CD4-positive, alpha-beta memory T cell (primary cell): ENCODE measurements at regions of chr21 and their contacts with region 1.

Region 1: GRCh38 chr21:36966066-36966820 is at the start of gene HLCS:
- DNase-seq: peak; percentile 72 to 80 (median 76)
- H3K4me3 ChIP-seq: peak within 1 kb of the TSS in 1 of 2 donors; percentile 54
- H3K4me3 Mint-ChIP-seq: peak within 1 kb of the TSS; percentile 76 to 92 (median 87)
- H3K27ac ChIP-seq: peak within 1 kb of the TSS; percentile 58
- H3K27ac Mint-ChIP-seq: peak within 1 kb of the TSS; percentile 81 to 96 (median 88)
- H3K4me1 ChIP-seq: peaks cover 14% of the 10 kb centered on the region
- H3K4me1 Mint-ChIP-seq: peaks cover 7 to 20% (median 15%) of the 10 kb centered on the region in 4 donors
- H3K27me3 ChIP-seq: no peaks in the 10 kb centered on the region
- H3K27me3 Mint-ChIP-seq: no peaks in the 10 kb centered on the region
- total RNA-seq, gene HLCS: 13.9 to 14.7 TPM

Region 2: GRCh38 chr21:36976882-36977651 is 10.8 kb after region 1 on chr21:
- CTCF ChIA-PET with region 1: interaction called, 18 read pairs
- POLR2A ChIA-PET with region 1: interaction called, 5 read pairs
- intact Hi-C with region 1: no loop called
- DNase-seq: peak in 4 of 5 donors; percentile 31 to 69 (median 54)
- H3K4me3 ChIP-seq: no peak overlapping the region
- H3K4me3 Mint-ChIP-seq: peak overlapping the region in 3 of 8 donors; percentile 12 to 46 (median 43)
- H3K27ac ChIP-seq: no peak overlapping the region
- H3K27ac Mint-ChIP-seq: peak overlapping the region in 6 of 7 donors; percentile 24 to 81 (median 74)
- H3K4me1 ChIP-seq: no peaks in the 10 kb centered on the region
- H3K4me1 Mint-ChIP-seq: peaks cover 5 to 22% (median 15%) of the 10 kb centered on the region in 4 donors
- H3K27me3 ChIP-seq: no peaks in the 10 kb centered on the region
- H3K27me3 Mint-ChIP-seq: peaks cover 2 to 8% of the 10 kb centered on the region in 2 donors